Posterior cingulate gyrus (tissue), 11 donors: ENCODE measurements at regions of chr11 and their contacts with region 1.

Region 1: GRCh38 chr11:130827451-130828377 is 88.6 kb downstream of the SNX19 start:
- DNase-seq: peak in 1 of 10 donors; percentile 85

Region 2: DNA sequence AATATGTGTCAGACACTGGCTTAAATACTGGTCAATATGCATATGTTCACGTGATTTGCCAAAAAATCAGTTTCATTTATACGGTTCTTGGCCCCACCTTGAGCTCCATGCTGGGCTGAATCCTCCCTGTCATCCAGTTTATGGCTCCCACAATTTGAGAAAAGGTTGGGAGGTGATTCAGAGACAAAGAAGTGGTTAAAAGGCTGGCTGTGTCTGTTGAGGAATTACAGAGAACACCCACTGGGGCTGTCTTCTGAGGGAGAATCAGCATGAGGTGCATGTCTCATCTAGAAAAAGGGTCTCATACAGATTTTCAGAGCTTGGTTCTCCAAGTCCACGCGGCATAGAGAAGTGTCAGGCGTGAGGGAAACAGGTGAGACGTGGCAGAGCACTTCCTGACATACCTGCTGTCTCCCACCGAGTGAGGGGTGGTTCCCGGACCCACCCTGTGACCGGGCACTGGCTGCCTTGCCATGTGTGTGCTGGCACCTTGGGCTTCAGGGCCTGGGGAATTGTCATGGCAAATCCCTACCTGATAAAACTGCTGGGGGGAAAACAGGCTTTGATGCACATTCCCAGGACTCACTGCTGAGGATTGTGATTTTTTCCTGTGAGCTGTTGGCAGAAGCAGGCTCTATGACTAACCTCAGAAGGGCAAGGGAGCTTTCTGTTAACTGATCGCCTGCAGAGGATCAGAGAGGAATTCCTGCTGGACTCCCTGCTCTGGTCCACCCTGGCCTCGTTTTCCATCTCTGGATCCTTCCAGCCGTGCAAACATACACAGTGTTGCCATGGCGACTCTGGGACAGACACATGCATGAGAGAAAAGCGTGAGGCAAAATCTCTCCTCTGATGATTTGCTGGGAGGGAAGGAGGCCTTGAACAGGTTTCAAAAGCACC is 155.7 kb before region 1 on chr11:
- intact Hi-C with region 1: loop called (anchors 10 kb)
- DNase-seq: peak in 6 of 10 donors; percentile 39 to 92 (median 60)